ENCODE measurements at regions of chr4 and their contacts with region 1.

Region 1: DNA sequence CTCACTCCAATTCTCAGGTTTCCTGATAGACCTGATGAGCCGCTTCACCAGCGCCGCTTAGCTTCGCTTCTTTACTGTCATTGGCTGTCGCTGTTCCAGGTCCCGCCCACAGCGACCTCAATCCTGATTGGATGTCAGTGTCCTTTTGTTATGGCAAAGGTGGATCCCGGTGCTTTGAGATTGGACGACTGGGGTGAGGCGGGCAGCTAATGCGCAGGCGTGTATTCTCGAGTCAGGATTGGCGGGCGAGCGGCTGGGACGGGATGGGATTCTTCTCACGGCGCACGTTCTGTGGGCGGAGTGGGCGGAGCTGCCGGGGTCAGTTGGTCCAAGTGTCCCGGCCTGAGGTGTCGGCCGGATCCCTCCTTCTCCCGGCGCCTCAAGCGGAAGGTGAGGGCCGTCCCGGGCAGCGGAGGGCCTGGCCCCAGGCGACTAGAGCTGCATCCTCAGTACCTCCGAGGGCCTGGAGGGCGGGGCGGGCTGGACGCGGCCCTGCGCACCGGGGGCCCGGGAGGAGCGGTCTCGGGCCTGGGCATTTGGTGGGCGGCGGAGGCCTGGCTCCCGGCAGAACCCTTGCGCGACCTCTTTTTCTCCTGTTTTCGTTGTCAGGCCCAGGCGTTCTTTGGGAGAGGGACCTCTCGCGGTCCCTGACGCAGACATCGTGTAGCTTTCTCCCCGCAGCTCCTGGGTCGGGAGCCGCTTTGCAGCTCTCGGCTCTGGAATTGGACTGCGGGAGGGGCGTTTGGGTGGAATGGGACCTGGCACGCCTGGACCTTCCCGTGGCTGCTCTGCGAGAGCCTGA is at the start of gene SCOC:
- DNase-seq: peak; percentile 97
- H3K4me3 Mint-ChIP-seq: no peak within 1 kb of the TSS
- H3K27ac Mint-ChIP-seq: peak within 1 kb of the TSS; percentile 32
- H3K4me1 Mint-ChIP-seq: peaks cover 23% of the 10 kb centered on the region
- H3K27me3 Mint-ChIP-seq: no peaks in the 10 kb centered on the region
- total RNA-seq, gene SCOC: 33.9 and 34.0 TPM in 2 replicates

Region 2: GRCh38 chr4:139083956-139084803 is 1289.3 kb before region 1 on chr4:
- intact Hi-C with region 1: loop called (anchors 5 kb)
- DNase-seq: peak; percentile 78
- H3K4me3 Mint-ChIP-seq: peak overlapping the region; percentile 86
- H3K27ac Mint-ChIP-seq: peak overlapping the region; percentile 98
- H3K4me1 Mint-ChIP-seq: peaks cover 28% of the 10 kb centered on the region
- H3K27me3 Mint-ChIP-seq: no peaks in the 10 kb centered on the region

Region 3: GRCh38 chr4:139453371-139454110 is 920.0 kb before region 1 on chr4:
- intact Hi-C with region 1: loop called (anchors 1 kb)
- DNase-seq: peak; percentile 95
- H3K4me3 Mint-ChIP-seq: peak overlapping the region; percentile 94
- H3K27ac Mint-ChIP-seq: peak overlapping the region; percentile 99
- H3K4me1 Mint-ChIP-seq: peaks cover 58% of the 10 kb centered on the region
- H3K27me3 Mint-ChIP-seq: no peaks in the 10 kb centered on the region

Region 4: DNA sequence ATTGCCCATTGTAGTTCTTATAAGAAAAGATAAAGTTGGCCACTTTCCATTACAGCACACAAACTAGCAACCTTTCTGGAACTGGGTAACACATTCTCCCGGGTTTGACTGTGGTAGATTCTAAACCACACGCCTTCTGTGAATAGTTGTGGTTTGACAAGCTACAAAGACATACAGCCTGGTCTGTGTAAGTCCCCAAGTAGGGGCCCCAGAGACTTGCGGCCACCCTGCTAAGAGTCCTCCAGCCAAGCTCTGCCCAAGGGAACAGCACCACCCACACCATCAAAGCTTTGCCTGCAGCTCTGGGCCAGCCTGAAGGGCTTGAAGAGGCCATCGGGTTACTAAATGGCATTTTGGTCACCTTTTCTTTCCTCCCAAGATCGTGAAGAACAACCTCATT is 423.0 kb before region 1 on chr4:
- intact Hi-C with region 1: loop called (anchors 2 kb)
- DNase-seq: peak; percentile 57
- H3K4me3 Mint-ChIP-seq: peak overlapping the region; percentile 48
- H3K27ac Mint-ChIP-seq: peak overlapping the region; percentile 85
- H3K4me1 Mint-ChIP-seq: peaks cover 49% of the 10 kb centered on the region
- H3K27me3 Mint-ChIP-seq: peaks cover 9% of the 10 kb centered on the region

Region 5: DNA sequence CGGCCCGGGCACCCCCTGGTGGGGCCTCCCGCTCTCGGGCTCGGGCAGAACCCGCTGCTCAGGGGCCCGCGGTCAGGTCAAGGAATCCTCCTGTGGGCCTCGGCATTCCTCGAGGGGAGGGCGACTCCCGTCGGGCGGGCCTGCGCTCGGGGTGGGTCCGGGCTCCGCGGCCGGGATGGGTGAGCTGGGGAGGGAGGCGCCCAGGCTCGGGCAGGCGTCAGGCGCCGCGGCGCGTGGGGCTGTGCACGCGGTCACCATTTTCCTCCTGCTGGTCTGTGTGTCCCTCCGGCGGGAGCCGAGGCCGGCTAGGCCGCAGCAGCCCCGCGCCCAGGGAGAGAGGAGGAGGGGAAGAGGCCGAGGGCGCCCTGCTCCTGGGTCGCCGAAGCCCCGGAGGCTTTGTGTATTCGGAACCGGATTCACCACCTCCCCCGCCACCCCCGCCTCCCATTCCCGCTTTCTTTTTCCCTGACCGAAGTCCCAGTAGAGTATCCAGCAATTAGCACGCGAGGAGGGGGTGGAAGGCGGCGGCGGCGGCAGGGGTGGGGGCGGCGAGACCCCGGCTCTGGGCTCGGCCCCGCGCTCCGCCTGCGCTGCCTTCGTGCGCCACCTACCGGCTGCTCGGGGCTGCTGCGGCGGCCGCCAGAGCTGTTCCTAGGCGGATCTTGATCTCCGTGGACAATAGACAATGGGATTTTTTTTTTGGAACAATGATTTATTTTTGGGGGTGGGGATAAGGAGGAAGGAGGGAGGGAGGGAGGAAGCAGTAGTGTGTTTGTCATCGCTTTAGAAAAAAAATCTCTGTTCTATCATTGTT is 120.6 kb before region 1 on chr4:
- intact Hi-C with region 1: loop called (anchors 5 kb)
- DNase-seq: peak; percentile 32
- H3K4me3 Mint-ChIP-seq: peak overlapping the region; percentile 76
- H3K27ac Mint-ChIP-seq: peak overlapping the region; percentile 59
- H3K4me1 Mint-ChIP-seq: peaks cover 28% of the 10 kb centered on the region
- H3K27me3 Mint-ChIP-seq: peaks cover 36% of the 10 kb centered on the region

Region 6: GRCh38 chr4:140463182-140463581 is 89.7 kb after region 1 on chr4:
- intact Hi-C with region 1: no loop called
- DNase-seq: no peak
- H3K4me3 Mint-ChIP-seq: no peak overlapping the region
- H3K27ac Mint-ChIP-seq: no peak overlapping the region
- H3K4me1 Mint-ChIP-seq: no peaks in the 10 kb centered on the region
- H3K27me3 Mint-ChIP-seq: peaks cover 1% of the 10 kb centered on the region

Region 7: GRCh38 chr4:140556372-140557085 is 183.0 kb after region 1 on chr4:
- intact Hi-C with region 1: loop called (anchors 1 kb)
- DNase-seq: peak; percentile 8
- H3K4me3 Mint-ChIP-seq: no peak overlapping the region
- H3K27ac Mint-ChIP-seq: no peak overlapping the region
- H3K4me1 Mint-ChIP-seq: peaks cover 17% of the 10 kb centered on the region
- H3K27me3 Mint-ChIP-seq: peaks cover 31% of the 10 kb centered on the region

Region 8: DNA sequence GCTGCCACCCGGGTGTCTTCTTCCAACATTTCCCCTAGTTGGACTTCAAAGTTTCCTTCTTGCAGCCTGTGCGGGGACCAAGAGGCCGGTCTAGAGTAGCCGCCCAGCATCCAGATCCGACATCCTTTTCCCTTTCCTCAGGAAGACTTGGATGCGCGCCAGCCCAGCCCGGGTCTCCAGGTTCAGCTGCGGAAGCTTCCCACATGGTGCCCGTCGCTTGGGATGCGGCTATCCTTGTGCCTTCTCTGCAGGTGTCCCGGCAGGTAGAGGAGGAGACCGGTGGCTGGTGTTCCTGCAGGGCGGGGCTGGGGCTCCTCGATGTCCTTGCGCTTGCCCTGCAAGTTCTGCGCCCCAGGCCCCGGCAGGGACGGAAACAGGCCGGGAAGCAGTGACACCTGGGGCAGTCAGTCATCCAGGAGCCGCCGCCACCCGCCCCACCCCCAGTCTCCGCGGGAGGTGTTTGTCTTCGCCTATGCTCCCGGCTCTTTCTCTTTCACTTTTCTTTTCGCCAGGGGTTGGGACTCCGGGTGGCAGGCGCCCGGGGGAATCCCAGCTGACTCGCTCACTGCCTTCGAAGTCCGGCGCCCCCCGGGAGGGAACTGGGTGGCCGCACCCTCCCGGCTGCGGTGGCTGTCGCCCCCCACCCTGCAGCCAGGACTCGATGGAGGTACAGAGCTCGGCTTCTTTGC is 1262.7 kb after region 1 on chr4 and contains the start of gene IL15:
- intact Hi-C with region 1: loop called (anchors 10 kb)
- DNase-seq: peak; percentile 70
- H3K4me3 Mint-ChIP-seq: peak within 1 kb of the TSS; percentile 96
- H3K27ac Mint-ChIP-seq: peak within 1 kb of the TSS; percentile 81
- H3K4me1 Mint-ChIP-seq: peaks cover 25% of the 10 kb centered on the region
- H3K27me3 Mint-ChIP-seq: peaks cover 20% of the 10 kb centered on the region
- total RNA-seq, gene IL15: 0.67 and 1.8 TPM in 2 replicates

Measured in activated T-helper 1 cell treated with anti-CD3 and anti-CD28 coated beads, Interleukin-12 subunit alpha, Interleukin-12 subunit beta, Interleukin-2, Interleukin-4 antibody, amounts not matched to agents 30 ng/mL and 10 ng/mL and 1 ng/mL, durations not matched to agents 14 hours and 24 hours and 36 hours (primary cell).